Activated CD4-positive, alpha-beta T cell treated with anti-CD3 and anti-CD28 coated beads for 36 hours (primary cell): ENCODE measurements at regions of chr14 and their contacts with region 1.

Region 1: DNA sequence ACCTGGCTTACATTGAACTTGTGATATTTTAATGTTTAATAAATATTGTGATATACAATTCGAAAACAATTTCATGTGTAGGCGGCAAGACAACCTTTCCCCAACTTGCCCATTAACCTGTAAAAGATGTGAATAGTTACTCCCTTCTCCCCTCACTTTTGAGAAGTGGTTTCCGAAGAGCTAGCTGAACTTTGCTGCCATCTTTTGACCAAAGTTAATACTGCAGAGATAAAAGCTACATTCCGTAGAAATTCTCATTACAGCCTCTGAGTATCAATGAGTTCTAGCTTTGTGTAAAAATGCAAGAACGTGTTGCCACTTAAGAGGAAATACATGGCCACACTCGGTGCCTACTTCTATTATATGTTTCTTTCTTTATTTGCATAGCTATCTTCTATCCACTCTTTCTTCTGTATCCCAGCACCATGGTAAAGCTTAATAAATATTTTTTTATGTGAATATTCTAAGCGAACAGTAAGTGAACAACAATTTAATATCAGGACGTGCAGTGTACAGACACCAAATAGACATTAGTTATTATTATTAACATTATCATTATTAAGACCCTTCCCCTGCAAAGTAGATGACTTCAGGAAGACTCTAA is 105.1 kb upstream of the TMEM260 start:
- DNase-seq: no peak
- ATAC-seq: no peak
- H3K4me3 Mint-ChIP-seq: no peak overlapping the region
- H3K27ac Mint-ChIP-seq: no peak overlapping the region
- H3K4me1 Mint-ChIP-seq: no peaks in the 10 kb centered on the region
- H3K27me3 Mint-ChIP-seq: no peaks in the 10 kb centered on the region

Region 2: DNA sequence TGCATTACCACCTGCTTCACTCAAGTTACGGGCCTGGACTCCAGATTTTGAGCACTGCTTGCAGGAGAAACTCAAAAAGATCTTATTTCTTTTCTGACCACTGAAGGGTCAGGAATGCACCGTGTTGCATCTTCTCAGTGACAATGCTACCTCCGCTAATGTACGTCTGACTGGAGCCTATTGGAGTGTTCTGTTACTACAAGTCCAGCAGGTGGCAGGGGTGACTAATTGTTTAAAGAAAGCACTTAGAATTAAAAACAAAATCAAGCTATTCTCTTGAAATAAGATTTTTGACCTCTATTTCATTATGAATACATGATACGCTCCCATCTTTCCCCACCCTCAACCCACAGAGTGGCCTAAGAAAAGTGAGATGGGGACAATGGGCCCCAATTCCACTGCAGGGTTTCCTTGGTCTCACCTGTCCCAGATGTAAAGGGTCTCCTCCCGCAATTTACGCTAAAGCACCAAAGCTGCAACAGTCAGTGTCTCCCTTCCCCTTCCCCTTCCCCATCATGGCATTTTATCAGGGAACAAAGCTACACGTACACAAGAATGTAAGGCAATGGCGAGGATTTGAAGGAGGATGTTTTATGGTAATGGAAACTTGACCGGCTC is 1036.3 kb before region 1 on chr14:
- CTCF ChIA-PET with region 1: interaction called, 5 read pairs
- POLR2A ChIA-PET with region 1: no interaction called
- intact Hi-C with region 1: loop called (anchors 2 to 5 kb)
- DNase-seq: peak; percentile 39
- ATAC-seq: no peak
- H3K4me3 Mint-ChIP-seq: no peak overlapping the region
- H3K27ac Mint-ChIP-seq: no peak overlapping the region
- H3K4me1 Mint-ChIP-seq: peaks cover 18% of the 10 kb centered on the region
- H3K27me3 Mint-ChIP-seq: no peaks in the 10 kb centered on the region

Region 3: GRCh38 chr14:55707365-55707804 is 767.1 kb before region 1 on chr14:
- CTCF ChIA-PET with region 1: interaction called, 3 read pairs
- POLR2A ChIA-PET with region 1: no interaction called
- intact Hi-C with region 1: loop called in 1 of 2 experiments (anchors 10 kb)
- DNase-seq: no peak
- ATAC-seq: no peak
- H3K4me3 Mint-ChIP-seq: no peak overlapping the region
- H3K27ac Mint-ChIP-seq: no peak overlapping the region
- H3K4me1 Mint-ChIP-seq: no peaks in the 10 kb centered on the region
- H3K27me3 Mint-ChIP-seq: no peaks in the 10 kb centered on the region

Region 4: GRCh38 chr14:55864890-55865655 is 609.4 kb before region 1 on chr14:
- CTCF ChIA-PET with region 1: interaction called, 4 read pairs
- POLR2A ChIA-PET with region 1: no interaction called
- intact Hi-C with region 1: loop called in 1 of 2 experiments (anchors 2 kb)
- DNase-seq: no peak
- ATAC-seq: no peak
- H3K4me3 Mint-ChIP-seq: no peak overlapping the region
- H3K27ac Mint-ChIP-seq: no peak overlapping the region
- H3K4me1 Mint-ChIP-seq: no peaks in the 10 kb centered on the region
- H3K27me3 Mint-ChIP-seq: peaks cover 3% of the 10 kb centered on the region

Region 5: GRCh38 chr14:56271970-56272369 is 202.6 kb before region 1 on chr14:
- CTCF ChIA-PET with region 1: no interaction called
- POLR2A ChIA-PET with region 1: no interaction called
- intact Hi-C with region 1: no loop called
- DNase-seq: no peak
- ATAC-seq: no peak
- H3K4me3 Mint-ChIP-seq: no peak overlapping the region
- H3K27ac Mint-ChIP-seq: no peak overlapping the region
- H3K4me1 Mint-ChIP-seq: no peaks in the 10 kb centered on the region
- H3K27me3 Mint-ChIP-seq: no peaks in the 10 kb centered on the region

Region 6: GRCh38 chr14:56528927-56529326 is 54.4 kb after region 1 on chr14:
- CTCF ChIA-PET with region 1: no interaction called
- POLR2A ChIA-PET with region 1: no interaction called
- intact Hi-C with region 1: no loop called
- DNase-seq: no peak
- ATAC-seq: no peak
- H3K4me3 Mint-ChIP-seq: no peak overlapping the region
- H3K27ac Mint-ChIP-seq: no peak overlapping the region
- H3K4me1 Mint-ChIP-seq: no peaks in the 10 kb centered on the region
- H3K27me3 Mint-ChIP-seq: peaks cover 19% of the 10 kb centered on the region

Region 7: DNA sequence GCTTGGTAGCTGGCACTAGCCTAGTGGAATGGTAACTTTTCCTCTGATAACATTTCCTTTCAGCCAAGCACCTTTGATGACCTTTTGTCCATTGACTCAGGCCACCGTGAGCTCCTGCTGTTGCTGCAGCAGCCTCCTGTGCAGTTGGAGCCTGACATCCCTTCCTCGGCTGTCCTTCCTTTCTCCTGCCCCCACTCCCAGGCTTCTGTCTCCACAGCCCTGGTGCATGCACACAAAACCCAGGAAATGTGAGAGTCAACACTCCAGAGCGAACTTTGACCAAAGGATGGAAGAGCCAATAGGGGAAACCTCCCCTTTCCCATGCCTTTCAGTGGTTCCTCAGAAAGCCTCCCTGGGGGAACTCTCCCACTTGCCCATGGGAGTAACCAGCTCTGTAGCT is 220.1 kb after region 1 on chr14:
- CTCF ChIA-PET with region 1: no interaction called
- POLR2A ChIA-PET with region 1: no interaction called
- intact Hi-C with region 1: no loop called
- DNase-seq: no peak
- ATAC-seq: no peak
- H3K4me3 Mint-ChIP-seq: no peak overlapping the region
- H3K27ac Mint-ChIP-seq: no peak overlapping the region
- H3K4me1 Mint-ChIP-seq: no peaks in the 10 kb centered on the region
- H3K27me3 Mint-ChIP-seq: peaks cover 7% of the 10 kb centered on the region